Natural killer cell (primary cell): ENCODE measurements at regions of chr6 and their contacts with region 1.

Region 1: DNA sequence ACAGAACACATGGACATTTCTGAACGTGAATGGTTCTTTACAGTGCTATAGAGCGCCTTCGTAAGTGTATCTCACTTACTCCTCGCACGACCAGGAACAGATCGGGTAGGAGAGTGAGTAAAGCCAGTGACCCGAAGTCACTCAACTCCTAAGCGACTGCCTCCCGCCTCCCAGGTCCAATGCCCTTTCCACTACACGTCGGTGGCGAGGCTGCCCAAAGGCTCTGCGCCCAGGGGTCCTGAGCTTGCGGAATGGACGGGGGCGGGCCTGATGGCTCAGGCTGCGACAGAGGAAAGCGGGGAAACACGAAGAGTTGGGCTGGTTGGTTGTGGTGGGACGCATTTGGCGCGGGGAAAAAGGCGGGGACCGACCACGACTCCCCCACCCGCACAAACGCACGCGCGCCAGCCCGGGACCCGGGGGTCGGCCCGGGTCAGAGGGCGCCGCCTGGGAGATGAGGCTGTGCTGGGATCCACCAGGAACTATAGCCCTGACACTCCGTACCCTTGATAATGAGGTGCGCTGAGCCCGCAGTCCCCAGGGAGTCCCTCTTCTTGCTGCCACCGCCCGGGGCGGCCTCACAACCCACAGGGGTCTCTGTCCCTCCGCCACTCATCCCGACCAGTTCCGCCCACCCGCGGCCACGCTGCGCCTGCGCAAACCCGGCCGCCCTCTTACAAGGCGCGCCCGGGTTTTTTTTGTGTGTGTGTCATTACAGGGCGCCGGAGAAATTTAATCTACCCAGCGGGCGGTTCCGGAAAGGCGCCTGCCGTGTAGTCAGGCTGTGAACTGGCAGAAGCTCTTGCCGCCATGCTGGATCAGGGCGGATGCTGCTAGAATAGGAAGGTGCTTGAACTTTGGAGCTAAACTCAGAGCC is at the start of gene BLOC1S5:
- DNase-seq: peak; percentile 95 to 97
- ATAC-seq: peak; percentile 93 to 98 (median 94)
- H3K4me3 ChIP-seq: peak within 1 kb of the TSS; percentile 81
- H3K4me3 Mint-ChIP-seq: peak within 1 kb of the TSS; percentile 95
- H3K27ac ChIP-seq: peak within 1 kb of the TSS; percentile 88
- H3K27ac Mint-ChIP-seq: peak within 1 kb of the TSS; percentile 92 to 98
- H3K4me1 ChIP-seq: peaks cover 7% of the 10 kb centered on the region
- H3K4me1 Mint-ChIP-seq: peaks cover 7 to 25% of the 10 kb centered on the region in 2 donors
- H3K27me3 ChIP-seq: no peaks in the 10 kb centered on the region
- H3K27me3 Mint-ChIP-seq: peaks cover 3 to 6% of the 10 kb centered on the region in 2 donors
- CTCF ChIP-seq: no peak
- total RNA-seq, gene BLOC1S5: 11.2 to 15.9 (median 15.4) TPM

Region 2: GRCh38 chr6:7312616-7313504 is 751.1 kb before region 1 on chr6 and contains the start of gene SSR1:
- intact Hi-C with region 1: loop called (anchors 2 kb)
- DNase-seq: peak; percentile 94 to 95
- ATAC-seq: peak; percentile 96 to 100 (median 98)
- H3K4me3 ChIP-seq: peak within 1 kb of the TSS; percentile 95
- H3K4me3 Mint-ChIP-seq: peak within 1 kb of the TSS; percentile 98
- H3K27ac ChIP-seq: peak within 1 kb of the TSS; percentile 87
- H3K27ac Mint-ChIP-seq: peak within 1 kb of the TSS; percentile 90 to 94
- H3K4me1 ChIP-seq: peaks cover 19% of the 10 kb centered on the region
- H3K4me1 Mint-ChIP-seq: peaks cover 36 to 39% of the 10 kb centered on the region in 2 donors
- H3K27me3 ChIP-seq: no peaks in the 10 kb centered on the region
- H3K27me3 Mint-ChIP-seq: no peaks in the 10 kb centered on the region
- CTCF ChIP-seq: no peak
- total RNA-seq, gene SSR1: 82.8 to 97.6 (median 93.1) TPM

Region 3: DNA sequence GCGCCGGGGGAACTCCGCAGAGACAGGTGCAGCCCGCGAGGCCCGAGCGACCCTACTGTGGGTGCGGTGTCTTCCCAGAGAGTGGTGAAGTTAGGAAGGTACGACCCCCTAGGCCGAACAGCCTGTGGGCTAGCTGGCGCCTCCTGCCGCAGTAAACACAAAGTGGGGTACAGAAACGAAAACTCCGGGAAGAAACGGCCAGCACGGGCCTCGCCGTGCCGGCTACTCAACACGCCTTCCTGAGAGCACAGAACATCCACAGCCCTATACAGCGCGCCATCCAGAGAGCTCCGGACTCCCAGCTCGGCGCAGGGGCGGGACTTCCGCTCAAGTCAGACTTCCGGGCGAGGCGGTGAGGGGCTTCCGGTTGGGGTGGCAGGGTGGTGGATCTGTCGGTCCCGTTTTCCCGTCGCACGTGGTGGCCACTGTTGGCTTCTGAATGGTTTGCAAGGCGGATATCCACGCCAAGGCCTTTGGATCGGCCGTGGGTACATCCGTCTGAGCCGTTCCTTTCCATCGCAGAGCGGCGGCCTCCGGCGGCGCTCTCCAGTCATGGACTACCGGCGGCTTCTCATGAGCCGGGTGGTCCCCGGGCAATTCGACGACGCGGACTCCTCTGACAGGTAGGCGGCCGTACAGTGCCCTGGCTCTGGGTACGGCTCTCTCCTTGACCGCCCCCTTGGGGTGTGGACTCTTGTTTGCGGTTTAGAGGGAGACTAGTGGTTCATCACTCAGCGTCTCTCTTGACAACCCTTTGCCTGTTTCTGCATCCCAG is 674.4 kb before region 1 on chr6 and contains the starts of genes CAGE1 and RIOK1:
- intact Hi-C with region 1: loop called (anchors 5 kb)
- DNase-seq: peak; percentile 93 to 97
- ATAC-seq: peak; percentile 86 to 97 (median 88)
- H3K4me3 ChIP-seq: peak within 1 kb of the TSS; percentile 73
- H3K4me3 Mint-ChIP-seq: peak within 1 kb of the TSS; percentile 91
- H3K27ac ChIP-seq: peak within 1 kb of the TSS; percentile 98
- H3K27ac Mint-ChIP-seq: peak within 1 kb of the TSS; percentile 87 to 88
- H3K4me1 ChIP-seq: peaks cover 12% of the 10 kb centered on the region
- H3K4me1 Mint-ChIP-seq: peaks cover 28 to 30% of the 10 kb centered on the region in 2 donors
- H3K27me3 ChIP-seq: no peaks in the 10 kb centered on the region
- H3K27me3 Mint-ChIP-seq: no peaks in the 10 kb centered on the region
- CTCF ChIP-seq: no peak
- total RNA-seq, gene CAGE1: 0.70 to 1.3 (median 1.1) TPM
- total RNA-seq, gene RIOK1: 36.8 to 48.4 (median 38.2) TPM

Region 4: GRCh38 chr6:7723041-7723447 is 341.0 kb before region 1 on chr6:
- intact Hi-C with region 1: loop called (anchors 5 kb)
- DNase-seq: peak; percentile 23 to 68
- ATAC-seq: peak in 1 of 3 donors; percentile 62
- H3K4me3 ChIP-seq: no peak overlapping the region
- H3K4me3 Mint-ChIP-seq: no peak overlapping the region
- H3K27ac ChIP-seq: no peak overlapping the region
- H3K27ac Mint-ChIP-seq: no peak overlapping the region
- H3K4me1 ChIP-seq: peaks cover 18% of the 10 kb centered on the region
- H3K4me1 Mint-ChIP-seq: peaks cover 0 to 13% of the 10 kb centered on the region in 2 donors
- H3K27me3 ChIP-seq: peaks cover 12% of the 10 kb centered on the region
- H3K27me3 Mint-ChIP-seq: peaks cover 34 to 43% of the 10 kb centered on the region in 2 donors
- CTCF ChIP-seq: peak; percentile 44

Region 5: DNA sequence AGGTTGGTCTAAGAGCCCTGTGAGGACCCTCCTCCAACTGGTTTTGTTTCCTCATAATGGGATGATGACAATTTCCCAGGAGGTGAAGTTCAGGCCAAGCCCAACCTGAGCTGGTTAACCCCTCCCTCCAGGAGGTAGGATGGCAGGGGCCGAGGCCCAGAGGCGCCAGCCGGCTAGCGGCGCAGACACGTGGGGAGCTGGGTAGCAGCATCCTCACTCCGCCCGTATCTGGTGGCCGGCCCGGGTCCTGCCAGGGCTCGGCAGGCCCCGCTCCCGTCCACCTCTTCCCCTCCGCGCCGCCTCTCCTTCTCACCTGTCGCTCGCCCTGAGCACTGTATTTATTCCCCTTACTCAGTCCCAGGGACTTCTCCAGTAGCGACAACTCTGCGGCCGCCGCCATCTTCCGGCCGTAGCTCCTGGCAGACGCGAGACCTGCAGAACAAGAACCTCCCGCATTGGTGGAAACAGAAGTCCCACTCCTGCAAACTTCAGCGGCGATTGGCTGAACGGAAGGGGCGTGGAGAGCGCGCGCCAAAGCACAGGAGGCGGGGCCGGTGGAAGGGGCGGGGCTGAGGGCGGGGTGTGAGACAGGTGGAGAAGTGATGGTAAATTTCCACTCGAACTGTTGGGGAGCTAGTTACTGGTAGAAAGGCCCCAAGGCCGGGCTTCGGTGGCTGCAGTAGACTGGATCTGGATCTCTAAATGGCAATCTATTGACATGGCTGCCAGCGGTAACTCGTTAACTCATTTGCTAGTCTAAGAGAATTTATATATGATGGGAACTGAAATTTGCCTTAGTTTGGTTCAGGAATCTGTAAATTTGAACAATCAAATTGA is 38.3 kb after region 1 on chr6 and contains the start of gene EEF1E1:
- intact Hi-C with region 1: loop called (anchors 1 kb)
- DNase-seq: peak; percentile 87 to 97
- ATAC-seq: peak; percentile 97 to 99 (median 98)
- H3K4me3 ChIP-seq: peak within 1 kb of the TSS; percentile 66
- H3K4me3 Mint-ChIP-seq: peak within 1 kb of the TSS; percentile 97
- H3K27ac ChIP-seq: peak within 1 kb of the TSS; percentile 60
- H3K27ac Mint-ChIP-seq: peak within 1 kb of the TSS; percentile 92 to 93
- H3K4me1 ChIP-seq: peaks cover 9% of the 10 kb centered on the region
- H3K4me1 Mint-ChIP-seq: peaks cover 26 to 32% of the 10 kb centered on the region in 2 donors
- H3K27me3 ChIP-seq: no peaks in the 10 kb centered on the region
- H3K27me3 Mint-ChIP-seq: peaks cover 12 to 28% of the 10 kb centered on the region in 2 donors
- CTCF ChIP-seq: no peak
- total RNA-seq, gene EEF1E1: 9.6 to 13.8 (median 10.2) TPM